ENCODE measurements at regions of chrX and their contacts with region 1.

Region 1: DNA sequence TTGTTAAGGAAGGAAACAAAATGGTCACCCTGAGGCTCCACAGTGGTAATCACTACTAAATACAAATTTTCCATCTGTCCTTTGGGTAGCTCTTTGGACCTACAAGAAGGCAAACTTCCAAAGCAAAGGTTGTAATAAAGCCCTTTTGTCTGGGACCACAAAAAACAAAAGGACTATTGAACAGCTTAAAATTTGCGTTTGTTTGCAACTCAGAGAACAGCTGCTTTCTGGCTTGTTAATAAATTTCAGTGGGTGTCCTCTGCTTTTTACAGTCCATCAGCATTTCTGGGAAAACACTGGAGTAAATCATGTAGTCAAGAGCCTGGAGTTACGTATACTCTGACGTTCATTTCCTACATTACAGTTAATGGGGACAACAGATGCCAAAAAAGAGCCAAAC is 439.7 kb upstream of the DIAPH2 start:
- DNase-seq: no peak

Region 2: GRCh38 chrX:96182366-96182765 is 62.6 kb before region 1 on chrX:
- intact Hi-C with region 1: loop called in 1 of 2 experiments (anchors 10 kb)
- DNase-seq: no peak

Region 3: GRCh38 chrX:96889722-96890121 is 644.8 kb after region 1 on chrX:
- intact Hi-C with region 1: no loop called
- DNase-seq: no peak

Measured in posterior vena cava (tissue), 2 donors.